Naive thymus-derived CD4-positive, alpha-beta T cell (primary cell): ENCODE measurements at regions of chr3 and their contacts with region 1.

Region 1: GRCh38 chr3:129627429-129628168 is 21.1 kb upstream of the PLXND1 start:
- DNase-seq: peak in 8 of 9 donors; percentile 43 to 77 (median 70)
- ATAC-seq: peak; percentile 78
- H3K4me3 ChIP-seq: peak overlapping the region; percentile 67
- H3K4me3 Mint-ChIP-seq: peak overlapping the region; percentile 87 to 93 (median 90)
- H3K27ac ChIP-seq: peak overlapping the region; percentile 51
- H3K27ac Mint-ChIP-seq: peak overlapping the region in 8 of 9 donors; percentile 2 to 86 (median 82)
- H3K4me1 ChIP-seq: peaks cover 5 to 9% of the 10 kb centered on the region in 2 donors
- H3K4me1 Mint-ChIP-seq: peaks cover 5 to 25% (median 17%) of the 10 kb centered on the region in 7 donors
- H3K27me3 ChIP-seq: no peaks in the 10 kb centered on the region
- H3K27me3 Mint-ChIP-seq: peaks cover 0 to 2% (median 0%) of the 10 kb centered on the region in 5 donors

Region 2: DNA sequence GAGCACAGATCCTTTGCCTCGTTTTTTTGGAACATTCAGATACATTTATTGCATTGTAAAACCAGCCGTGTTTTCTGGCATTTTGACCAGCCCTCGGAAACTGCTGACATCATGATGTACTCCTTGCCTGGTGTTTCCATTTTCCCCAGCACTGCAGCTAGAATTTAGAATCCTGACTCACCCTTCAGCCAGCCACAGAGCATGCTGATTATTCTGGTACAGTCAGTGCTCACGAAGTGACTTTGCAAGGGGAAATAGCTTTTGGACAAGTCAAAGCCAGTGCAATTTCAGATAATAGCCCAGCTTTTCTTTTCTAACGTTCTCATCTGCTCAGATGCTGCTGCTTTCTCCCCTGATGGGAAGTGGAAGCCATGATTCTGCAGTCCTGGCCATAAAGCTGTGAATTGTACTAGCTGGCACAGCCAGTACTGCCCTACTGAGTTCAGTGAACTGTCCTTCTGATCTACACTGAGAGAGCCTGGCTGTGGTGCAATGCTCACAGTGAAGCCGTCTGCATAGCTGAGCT is 431.8 kb before region 1 on chr3:
- CTCF ChIA-PET with region 1: no interaction called
- POLR2A ChIA-PET with region 1: no interaction called
- intact Hi-C with region 1: no loop called
- DNase-seq: no peak
- ATAC-seq: peak; percentile 88
- H3K4me3 ChIP-seq: no peak overlapping the region
- H3K4me3 Mint-ChIP-seq: no peak overlapping the region
- H3K27ac ChIP-seq: no peak overlapping the region
- H3K27ac Mint-ChIP-seq: peak overlapping the region in 3 of 9 donors; percentile 36 to 72 (median 46)
- H3K4me1 ChIP-seq: no peaks in the 10 kb centered on the region
- H3K4me1 Mint-ChIP-seq: peaks cover 0 to 26% (median 0%) of the 10 kb centered on the region in 7 donors
- H3K27me3 ChIP-seq: no peaks in the 10 kb centered on the region
- H3K27me3 Mint-ChIP-seq: no peaks in the 10 kb centered on the region

Region 3: DNA sequence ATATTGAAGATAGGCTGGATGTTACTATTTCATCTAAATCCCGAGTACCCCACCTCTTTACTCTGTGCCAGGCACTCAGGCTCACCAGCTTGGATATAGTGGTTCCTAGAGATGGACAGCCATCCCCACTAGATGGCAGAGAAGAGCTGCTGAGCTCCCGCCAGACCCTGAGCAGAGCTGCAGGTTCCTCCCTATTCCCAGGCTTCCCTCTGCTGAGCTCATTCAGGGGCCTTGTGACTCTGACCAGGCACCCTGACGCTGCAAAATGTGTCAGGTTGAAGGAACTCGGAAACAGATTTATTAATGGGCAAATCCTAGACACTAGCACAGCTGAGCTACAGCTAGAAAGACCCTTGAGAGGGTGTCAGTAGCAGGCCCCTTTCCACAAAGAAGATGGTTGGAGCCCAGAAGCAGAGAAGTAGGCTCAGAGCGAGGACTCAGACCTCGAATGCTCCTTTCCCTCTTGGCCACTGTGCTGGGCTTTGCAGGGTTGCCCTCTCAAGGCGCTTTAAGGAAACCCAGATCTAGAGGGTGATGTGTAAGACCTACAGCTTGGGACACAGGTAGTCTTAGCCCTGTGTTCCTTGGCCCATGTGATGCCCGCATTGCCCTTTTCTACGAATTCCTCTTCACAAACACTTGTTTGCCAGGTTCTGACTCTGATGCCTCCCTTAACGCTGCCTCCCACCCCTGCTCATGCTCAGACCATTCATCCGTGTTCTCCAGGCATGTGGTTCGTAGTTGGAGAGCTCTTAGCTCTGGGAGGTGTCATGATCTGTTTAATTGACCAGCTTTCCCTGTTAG is 137.2 kb before region 1 on chr3:
- CTCF ChIA-PET with region 1: interaction called, 9 read pairs
- POLR2A ChIA-PET with region 1: no interaction called
- intact Hi-C with region 1: loop called in 1 of 2 experiments (anchors 1 kb)
- DNase-seq: peak in 8 of 9 donors; percentile 16 to 56 (median 40)
- ATAC-seq: peak; percentile 91
- H3K4me3 ChIP-seq: no peak overlapping the region
- H3K4me3 Mint-ChIP-seq: no peak overlapping the region
- H3K27ac ChIP-seq: no peak overlapping the region
- H3K27ac Mint-ChIP-seq: no peak overlapping the region
- H3K4me1 ChIP-seq: no peaks in the 10 kb centered on the region
- H3K4me1 Mint-ChIP-seq: peaks cover 0 to 3% (median 0%) of the 10 kb centered on the region in 7 donors
- H3K27me3 ChIP-seq: no peaks in the 10 kb centered on the region
- H3K27me3 Mint-ChIP-seq: no peaks in the 10 kb centered on the region

Region 4: DNA sequence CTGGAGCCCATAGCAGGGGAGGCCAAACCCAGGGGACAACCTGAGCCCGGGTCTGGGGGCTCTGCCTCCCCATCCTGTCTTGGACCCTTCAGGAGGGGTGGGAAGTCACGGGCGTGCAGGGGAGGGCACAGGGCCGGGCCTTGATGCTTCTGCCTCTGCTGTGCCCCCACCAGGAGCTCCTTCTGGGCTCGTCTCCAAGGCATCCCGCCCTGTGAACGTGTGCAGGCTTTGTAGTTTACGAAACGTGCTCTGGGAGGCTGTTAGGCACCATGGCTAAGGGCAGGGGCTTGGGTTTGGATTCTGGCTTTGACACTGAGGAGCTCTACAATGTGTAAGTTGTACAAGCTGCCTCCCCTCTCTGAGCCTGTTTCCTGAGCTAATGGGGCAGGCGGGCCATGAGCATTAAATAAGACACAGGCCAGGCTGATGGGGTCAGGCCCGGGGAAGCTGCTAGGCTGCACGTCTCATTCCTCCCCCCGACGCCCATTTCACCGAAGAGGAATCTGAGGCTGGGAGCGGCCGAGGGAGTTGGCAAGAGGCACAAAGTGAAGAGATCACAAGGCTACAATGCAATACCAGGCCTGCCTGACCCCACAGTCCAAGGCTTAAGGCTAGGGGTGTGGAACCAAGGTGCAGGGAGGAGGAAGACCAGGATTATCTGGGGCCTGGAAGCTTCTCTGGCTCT is 40.7 kb before region 1 on chr3:
- CTCF ChIA-PET with region 1: no interaction called
- POLR2A ChIA-PET with region 1: no interaction called
- intact Hi-C with region 1: no loop called
- DNase-seq: no peak
- ATAC-seq: no peak
- H3K4me3 ChIP-seq: no peak overlapping the region
- H3K4me3 Mint-ChIP-seq: no peak overlapping the region
- H3K27ac ChIP-seq: no peak overlapping the region
- H3K27ac Mint-ChIP-seq: no peak overlapping the region
- H3K4me1 ChIP-seq: no peaks in the 10 kb centered on the region
- H3K4me1 Mint-ChIP-seq: peaks cover 0 to 7% (median 3%) of the 10 kb centered on the region in 7 donors
- H3K27me3 ChIP-seq: no peaks in the 10 kb centered on the region
- H3K27me3 Mint-ChIP-seq: peaks cover 0 to 19% (median 0%) of the 10 kb centered on the region in 5 donors

Region 5: DNA sequence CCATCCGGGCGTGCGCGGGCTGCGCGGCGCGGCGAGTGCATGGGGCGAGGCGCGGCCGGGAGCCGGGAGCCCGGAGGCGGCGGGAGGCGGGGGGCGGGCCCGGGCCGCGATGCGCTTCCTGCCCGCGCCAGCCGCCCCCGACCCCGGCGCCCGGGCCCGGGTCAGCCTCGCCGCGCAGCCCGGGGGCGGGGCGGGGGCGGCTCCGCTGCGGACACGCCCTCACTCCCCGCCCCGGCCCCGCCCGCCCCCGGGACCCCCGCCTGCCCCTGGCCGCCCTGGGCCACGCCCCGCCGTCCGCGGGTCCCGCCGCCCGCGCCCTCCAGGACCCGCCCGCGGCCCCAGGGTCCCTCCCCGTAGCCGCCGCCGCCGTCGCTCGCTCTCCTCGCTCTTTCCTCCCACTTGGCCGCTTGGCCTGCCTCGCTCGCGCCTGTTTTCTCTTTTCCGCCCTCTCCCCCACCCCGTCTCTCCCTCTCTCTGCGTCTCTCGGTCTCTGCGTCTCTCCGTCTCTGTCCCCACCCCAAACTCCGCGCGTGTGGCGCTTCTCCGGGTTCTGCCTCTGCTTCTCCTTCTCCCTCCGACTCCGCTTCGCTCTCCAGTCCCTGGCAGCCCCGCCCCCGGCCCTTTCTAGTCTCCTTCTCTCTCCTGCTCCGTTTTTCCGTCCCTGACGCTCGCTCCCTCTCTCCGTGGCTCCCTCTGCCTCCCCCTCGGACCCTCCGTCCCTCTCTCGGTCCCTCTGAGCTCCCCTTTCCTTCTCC is 20.8 kb before region 1 on chr3 and contains the start of gene PLXND1:
- CTCF ChIA-PET with region 1: no interaction called
- POLR2A ChIA-PET with region 1: no interaction called
- intact Hi-C with region 1: loop called in 1 of 2 experiments (anchors 2 kb)
- DNase-seq: peak in 5 of 9 donors; percentile 14 to 49 (median 25)
- ATAC-seq: peak; percentile 76
- H3K4me3 ChIP-seq: peak within 1 kb of the TSS; percentile 53
- H3K4me3 Mint-ChIP-seq: peak within 1 kb of the TSS; percentile 89 to 98 (median 93)
- H3K27ac ChIP-seq: peak within 1 kb of the TSS; percentile 51
- H3K27ac Mint-ChIP-seq: peak within 1 kb of the TSS; percentile 35 to 92 (median 84)
- H3K4me1 ChIP-seq: peaks cover 0 to 6% of the 10 kb centered on the region in 2 donors
- H3K4me1 Mint-ChIP-seq: peaks cover 11 to 25% (median 14%) of the 10 kb centered on the region in 7 donors
- H3K27me3 ChIP-seq: peaks cover 0 to 6% of the 10 kb centered on the region in 2 donors
- H3K27me3 Mint-ChIP-seq: peaks cover 8 to 64% (median 11%) of the 10 kb centered on the region in 5 donors
- total RNA-seq, gene PLXND1: 1.9 to 82.5 (median 7.5) TPM

Region 6: GRCh38 chr3:129732200-129732876 is 104.7 kb after region 1 on chr3:
- CTCF ChIA-PET with region 1: no interaction called
- POLR2A ChIA-PET with region 1: no interaction called
- intact Hi-C with region 1: no loop called
- DNase-seq: no peak
- ATAC-seq: no peak
- H3K4me3 ChIP-seq: no peak overlapping the region
- H3K4me3 Mint-ChIP-seq: no peak overlapping the region
- H3K27ac ChIP-seq: no peak overlapping the region
- H3K27ac Mint-ChIP-seq: no peak overlapping the region
- H3K4me1 ChIP-seq: no peaks in the 10 kb centered on the region
- H3K4me1 Mint-ChIP-seq: no peaks in the 10 kb centered on the region
- H3K27me3 ChIP-seq: no peaks in the 10 kb centered on the region
- H3K27me3 Mint-ChIP-seq: no peaks in the 10 kb centered on the region

Region 7: DNA sequence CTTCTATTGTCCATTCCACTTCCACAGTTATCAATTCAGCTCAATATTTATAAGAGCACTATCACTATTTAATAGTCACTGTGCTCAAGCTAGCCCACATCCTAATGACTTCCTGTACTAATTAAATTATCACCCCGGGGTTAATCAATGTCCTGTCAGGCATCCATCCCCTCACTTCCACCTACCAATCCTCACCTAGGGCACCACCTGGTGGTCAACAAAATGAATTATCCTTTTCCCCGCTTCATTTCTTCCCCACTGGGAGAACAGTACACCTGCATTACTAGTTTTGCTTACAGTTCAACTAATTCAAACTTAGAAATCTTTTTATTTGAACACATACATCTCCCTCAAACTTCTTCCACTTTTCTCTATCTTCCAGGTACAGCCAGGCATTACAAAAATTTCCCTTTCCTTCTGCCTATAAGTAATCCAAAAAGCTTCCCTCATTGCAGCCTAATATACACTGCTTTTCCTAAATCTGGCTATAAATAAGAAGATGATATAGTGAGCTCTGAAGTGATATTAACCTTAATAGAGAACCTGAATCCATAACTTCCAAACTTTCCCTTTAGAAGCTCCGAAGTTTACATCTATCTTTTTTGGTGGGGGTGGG is 197.4 kb after region 1 on chr3:
- CTCF ChIA-PET with region 1: interaction called, 15 read pairs
- POLR2A ChIA-PET with region 1: no interaction called
- intact Hi-C with region 1: loop called (anchors 1 kb)
- DNase-seq: peak in 8 of 9 donors; percentile 20 to 52 (median 40)
- ATAC-seq: peak; percentile 53
- H3K4me3 ChIP-seq: no peak overlapping the region
- H3K4me3 Mint-ChIP-seq: no peak overlapping the region
- H3K27ac ChIP-seq: no peak overlapping the region
- H3K27ac Mint-ChIP-seq: no peak overlapping the region
- H3K4me1 ChIP-seq: peaks cover 0 to 7% of the 10 kb centered on the region in 2 donors
- H3K4me1 Mint-ChIP-seq: peaks cover 12 to 26% (median 23%) of the 10 kb centered on the region in 7 donors
- H3K27me3 ChIP-seq: no peaks in the 10 kb centered on the region
- H3K27me3 Mint-ChIP-seq: no peaks in the 10 kb centered on the region

Region 8: GRCh38 chr3:130093741-130094391 is 466.3 kb after region 1 on chr3:
- CTCF ChIA-PET with region 1: no interaction called
- POLR2A ChIA-PET with region 1: no interaction called
- intact Hi-C with region 1: loop called in 1 of 2 experiments (anchors 5 kb)
- DNase-seq: peak in 1 of 9 donors; percentile 3
- ATAC-seq: no peak
- H3K4me3 ChIP-seq: no peak overlapping the region
- H3K4me3 Mint-ChIP-seq: peak overlapping the region; percentile 54 to 74 (median 64)
- H3K27ac ChIP-seq: no peak overlapping the region
- H3K27ac Mint-ChIP-seq: peak overlapping the region in 7 of 9 donors; percentile 28 to 86 (median 49)
- H3K4me1 ChIP-seq: peaks cover 0 to 3% of the 10 kb centered on the region in 2 donors
- H3K4me1 Mint-ChIP-seq: peaks cover 6 to 36% (median 27%) of the 10 kb centered on the region in 7 donors
- H3K27me3 ChIP-seq: no peaks in the 10 kb centered on the region
- H3K27me3 Mint-ChIP-seq: no peaks in the 10 kb centered on the region